ENCODE measurements at regions of chr12 and their contacts with region 1.

Region 1: GRCh38 chr12:39103552-39104165 is 198.3 kb upstream of the CPNE8 start:
- DNase-seq: peak in 5 of 9 donors; percentile 13 to 37 (median 24)
- ATAC-seq: peak; percentile 84
- H3K4me3 ChIP-seq: no peak overlapping the region
- H3K4me3 Mint-ChIP-seq: no peak overlapping the region
- H3K27ac ChIP-seq: no peak overlapping the region
- H3K27ac Mint-ChIP-seq: no peak overlapping the region
- H3K4me1 ChIP-seq: no peaks in the 10 kb centered on the region
- H3K4me1 Mint-ChIP-seq: no peaks in the 10 kb centered on the region
- H3K27me3 ChIP-seq: no peaks in the 10 kb centered on the region
- H3K27me3 Mint-ChIP-seq: no peaks in the 10 kb centered on the region

Region 2: DNA sequence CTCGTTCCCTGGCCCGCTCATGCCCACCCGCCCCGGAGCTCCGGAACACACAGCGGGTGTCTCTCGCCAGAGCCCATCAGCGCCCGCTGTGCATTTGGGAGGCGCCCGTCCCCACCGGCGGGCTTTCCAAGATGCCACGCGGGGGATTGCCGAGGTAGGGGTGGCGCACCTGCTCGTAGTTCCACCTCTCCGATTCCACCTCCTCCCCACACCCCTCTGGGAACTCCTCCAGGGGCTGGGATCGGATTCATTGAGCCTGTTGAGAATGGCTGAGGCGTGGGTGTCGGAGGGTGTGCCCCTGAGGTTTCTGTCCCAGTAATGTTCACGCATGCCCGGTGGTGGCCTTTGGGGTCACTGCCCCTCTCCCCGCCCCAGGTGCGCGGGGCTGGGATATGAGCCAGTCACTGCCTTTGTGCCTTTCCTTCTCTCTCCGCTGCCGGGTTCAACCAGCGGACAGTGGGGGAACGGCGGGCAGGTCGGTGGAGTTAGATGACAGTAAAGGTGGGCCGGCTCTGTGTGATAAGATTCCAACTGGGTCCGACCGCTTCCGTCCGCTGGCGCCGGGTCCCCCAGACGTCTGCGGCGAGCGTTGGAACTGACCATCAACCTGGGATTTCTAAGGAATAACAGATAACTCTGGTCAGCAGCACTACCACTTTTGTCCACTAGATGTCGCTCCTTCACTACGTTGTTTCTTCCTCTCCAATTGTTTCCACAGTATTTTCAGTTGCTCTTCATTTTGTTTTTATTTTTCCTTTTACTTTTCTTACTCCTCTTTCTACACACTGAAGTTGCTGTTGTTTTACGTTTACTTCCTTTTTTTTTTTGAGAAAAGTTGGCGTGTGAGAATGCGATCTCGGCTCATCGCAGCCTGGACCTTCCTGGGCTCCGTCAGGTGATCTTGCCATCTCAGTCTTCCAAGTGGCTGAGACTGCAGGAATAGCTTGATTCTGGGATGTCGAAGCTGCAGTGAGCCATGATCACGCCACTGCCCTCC is 965.1 kb before region 1 on chr12:
- CTCF ChIA-PET with region 1: no interaction called
- POLR2A ChIA-PET with region 1: no interaction called
- intact Hi-C with region 1: loop called (anchors 1 kb)
- DNase-seq: peak in 8 of 9 donors; percentile 26 to 65 (median 54)
- ATAC-seq: peak; percentile 74
- H3K4me3 ChIP-seq: peak overlapping the region; percentile 31
- H3K4me3 Mint-ChIP-seq: peak overlapping the region; percentile 45 to 89 (median 80)
- H3K27ac ChIP-seq: no peak overlapping the region
- H3K27ac Mint-ChIP-seq: peak overlapping the region in 4 of 9 donors; percentile 33 to 71 (median 53)
- H3K4me1 ChIP-seq: peaks cover 0 to 3% of the 10 kb centered on the region in 2 donors
- H3K4me1 Mint-ChIP-seq: peaks cover 0 to 13% (median 9%) of the 10 kb centered on the region in 7 donors
- H3K27me3 ChIP-seq: no peaks in the 10 kb centered on the region
- H3K27me3 Mint-ChIP-seq: peaks cover 0 to 29% (median 18%) of the 10 kb centered on the region in 5 donors

Region 3: DNA sequence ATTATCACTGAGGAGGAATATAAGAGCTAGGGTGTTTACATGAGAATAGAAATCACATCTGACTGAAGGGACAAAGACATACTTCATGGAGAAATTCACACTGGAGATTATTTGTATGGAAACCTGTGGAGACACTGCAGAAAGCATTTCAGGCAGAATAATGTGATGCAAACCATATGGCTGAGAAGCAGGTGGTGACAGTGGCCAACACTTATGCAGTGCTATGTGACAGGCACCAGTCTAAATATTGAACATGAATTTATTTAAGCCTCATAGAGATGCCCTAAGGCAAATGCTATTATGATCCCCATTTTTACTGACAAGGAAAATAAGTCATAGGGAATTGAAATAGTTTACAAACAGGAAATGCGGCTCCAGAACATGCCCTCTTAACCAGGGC is 770.8 kb before region 1 on chr12:
- CTCF ChIA-PET with region 1: no interaction called
- POLR2A ChIA-PET with region 1: no interaction called
- intact Hi-C with region 1: loop called in 1 of 2 experiments (anchors 1 kb)
- DNase-seq: no peak
- ATAC-seq: no peak
- H3K4me3 ChIP-seq: no peak overlapping the region
- H3K4me3 Mint-ChIP-seq: no peak overlapping the region
- H3K27ac ChIP-seq: no peak overlapping the region
- H3K27ac Mint-ChIP-seq: no peak overlapping the region
- H3K4me1 ChIP-seq: no peaks in the 10 kb centered on the region
- H3K4me1 Mint-ChIP-seq: peaks cover 0 to 4% (median 0%) of the 10 kb centered on the region in 7 donors
- H3K27me3 ChIP-seq: no peaks in the 10 kb centered on the region
- H3K27me3 Mint-ChIP-seq: no peaks in the 10 kb centered on the region

Region 4: GRCh38 chr12:38664661-38665269 is 438.9 kb before region 1 on chr12:
- CTCF ChIA-PET with region 1: no interaction called
- POLR2A ChIA-PET with region 1: no interaction called
- intact Hi-C with region 1: loop called in 1 of 2 experiments (anchors 2 kb)
- DNase-seq: no peak
- ATAC-seq: no peak
- H3K4me3 ChIP-seq: no peak overlapping the region
- H3K4me3 Mint-ChIP-seq: no peak overlapping the region
- H3K27ac ChIP-seq: no peak overlapping the region
- H3K27ac Mint-ChIP-seq: no peak overlapping the region
- H3K4me1 ChIP-seq: no peaks in the 10 kb centered on the region
- H3K4me1 Mint-ChIP-seq: no peaks in the 10 kb centered on the region
- H3K27me3 ChIP-seq: no peaks in the 10 kb centered on the region
- H3K27me3 Mint-ChIP-seq: no peaks in the 10 kb centered on the region

Region 5: DNA sequence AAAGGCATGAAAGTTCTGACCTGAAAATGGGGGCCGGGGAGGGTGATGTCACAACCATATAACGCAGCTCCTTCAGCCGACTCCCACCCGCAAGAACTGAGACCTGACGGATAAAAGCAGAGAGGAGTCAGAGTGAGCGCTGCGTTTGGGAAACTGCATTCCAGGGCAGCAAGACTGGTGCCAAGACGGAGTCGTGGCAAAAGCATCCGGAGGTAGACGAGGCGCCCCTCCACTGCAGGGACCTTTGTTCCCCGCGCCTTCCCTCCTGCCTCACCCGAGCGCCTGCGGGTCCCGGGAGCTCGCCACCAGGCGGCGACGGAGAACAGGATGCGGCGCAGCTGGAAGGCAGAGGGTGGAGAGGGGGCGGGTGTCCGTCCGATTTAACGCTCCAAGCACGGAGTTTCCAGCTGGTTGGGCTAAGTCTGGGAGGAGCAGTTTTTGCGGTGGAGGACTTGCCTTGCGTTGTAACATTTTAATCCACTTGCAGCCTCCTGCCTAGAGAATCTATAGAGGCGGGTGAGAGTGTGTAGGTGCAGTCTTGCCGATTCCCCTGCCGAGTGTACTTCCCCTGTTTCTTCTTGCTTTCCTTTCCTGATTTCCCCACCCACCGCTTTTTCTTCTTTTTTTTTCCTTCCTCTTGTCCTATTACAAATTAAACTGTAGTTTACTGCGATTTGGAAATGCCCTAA is 197.0 kb before region 1 on chr12:
- CTCF ChIA-PET with region 1: no interaction called
- POLR2A ChIA-PET with region 1: no interaction called
- intact Hi-C with region 1: loop called in 1 of 2 experiments (anchors 1 kb)
- DNase-seq: peak; percentile 25 to 83 (median 49)
- ATAC-seq: peak; percentile 77
- H3K4me3 ChIP-seq: peak overlapping the region; percentile 76
- H3K4me3 Mint-ChIP-seq: peak overlapping the region; percentile 86 to 97 (median 92)
- H3K27ac ChIP-seq: no peak overlapping the region
- H3K27ac Mint-ChIP-seq: peak overlapping the region in 6 of 9 donors; percentile 38 to 95 (median 56)
- H3K4me1 ChIP-seq: no peaks in the 10 kb centered on the region
- H3K4me1 Mint-ChIP-seq: peaks cover 17 to 36% (median 25%) of the 10 kb centered on the region in 7 donors
- H3K27me3 ChIP-seq: no peaks in the 10 kb centered on the region
- H3K27me3 Mint-ChIP-seq: peaks cover 6 to 27% (median 21%) of the 10 kb centered on the region in 5 donors

Region 6: DNA sequence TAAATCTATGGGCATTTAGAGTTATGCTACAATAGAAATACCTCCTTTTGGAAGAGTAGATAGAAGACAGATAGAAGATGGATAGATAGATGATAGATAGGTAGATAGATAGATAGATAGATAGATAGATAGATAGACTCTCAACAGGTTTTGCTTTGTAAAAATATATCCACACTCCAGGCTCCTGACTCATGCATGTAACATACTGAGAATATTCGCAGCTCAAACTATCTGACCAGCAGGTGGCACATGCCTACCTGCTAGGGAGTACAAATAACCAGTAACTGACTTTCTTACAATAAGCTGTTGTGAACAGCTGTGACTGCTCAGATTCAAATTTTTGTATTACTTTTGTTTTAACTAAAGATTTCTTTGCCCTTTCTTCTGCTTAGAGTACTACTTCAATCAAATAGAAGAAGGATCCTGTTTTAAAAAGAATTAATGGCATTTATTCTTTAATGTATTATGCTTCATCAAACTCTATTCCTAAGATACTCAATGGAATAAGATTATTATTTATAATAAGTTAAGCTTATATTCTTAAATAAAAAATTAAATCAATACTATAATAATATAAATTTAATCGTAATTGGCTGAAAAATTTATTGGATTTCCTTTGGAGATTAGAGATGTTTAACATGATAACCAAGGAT is 182.5 kb before region 1 on chr12:
- CTCF ChIA-PET with region 1: no interaction called
- POLR2A ChIA-PET with region 1: no interaction called
- intact Hi-C with region 1: loop called (anchors 1 to 5 kb)
- DNase-seq: peak in 2 of 9 donors; percentile 3 to 5
- ATAC-seq: peak; percentile 65
- H3K4me3 ChIP-seq: no peak overlapping the region
- H3K4me3 Mint-ChIP-seq: no peak overlapping the region
- H3K27ac ChIP-seq: no peak overlapping the region
- H3K27ac Mint-ChIP-seq: no peak overlapping the region
- H3K4me1 ChIP-seq: no peaks in the 10 kb centered on the region
- H3K4me1 Mint-ChIP-seq: no peaks in the 10 kb centered on the region
- H3K27me3 ChIP-seq: no peaks in the 10 kb centered on the region
- H3K27me3 Mint-ChIP-seq: peaks cover 0 to 18% (median 0%) of the 10 kb centered on the region in 5 donors

Measured in naive thymus-derived CD4-positive, alpha-beta T cell (primary cell).